Activated CD4-positive, alpha-beta memory T cell treated with anti-CD3 and anti-CD28 coated beads for 36 hours (primary cell): ENCODE measurements at regions of chr12 and their contacts with region 1.

Region 1: DNA sequence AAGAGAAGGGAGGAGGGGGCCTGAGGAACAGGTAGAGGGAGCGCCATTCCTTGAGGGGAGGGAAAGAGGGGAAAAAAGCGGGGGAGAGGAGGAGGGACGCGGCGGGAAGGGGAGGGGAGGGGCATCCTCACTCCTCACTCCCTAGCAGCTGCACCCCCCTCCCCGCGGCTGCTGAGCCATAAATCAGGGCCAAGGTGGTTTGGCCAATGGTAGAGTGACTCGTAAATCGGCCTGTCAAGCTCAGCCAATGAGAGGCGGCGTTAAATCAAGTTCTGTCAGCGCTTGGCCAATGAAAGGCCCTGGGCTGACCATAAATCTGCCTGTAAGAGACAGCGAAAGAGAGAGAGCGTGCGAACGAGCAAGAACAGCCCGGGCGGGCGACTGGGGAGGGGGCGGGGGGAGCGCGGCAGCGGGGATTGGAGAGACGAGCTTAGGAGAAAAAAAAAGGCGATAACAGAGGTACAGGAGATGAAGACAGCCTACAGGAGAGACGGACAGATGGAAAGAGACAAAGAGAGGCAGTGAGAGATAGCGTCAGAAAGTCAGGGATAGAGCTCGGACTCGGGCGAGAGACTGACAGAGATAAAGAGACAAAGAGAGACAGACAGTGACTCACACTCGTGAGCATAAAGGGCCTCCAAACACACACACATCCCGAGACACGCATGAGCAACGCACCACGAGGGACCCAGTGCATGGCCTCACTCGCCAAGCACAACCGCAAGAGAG is 5.1 kb downstream of the GPR84 start:
- DNase-seq: peak; percentile 97
- H3K4me3 Mint-ChIP-seq: no peak overlapping the region
- H3K27ac Mint-ChIP-seq: no peak overlapping the region
- H3K4me1 Mint-ChIP-seq: peaks cover 16% of the 10 kb centered on the region
- H3K27me3 Mint-ChIP-seq: no peaks in the 10 kb centered on the region

Region 2: DNA sequence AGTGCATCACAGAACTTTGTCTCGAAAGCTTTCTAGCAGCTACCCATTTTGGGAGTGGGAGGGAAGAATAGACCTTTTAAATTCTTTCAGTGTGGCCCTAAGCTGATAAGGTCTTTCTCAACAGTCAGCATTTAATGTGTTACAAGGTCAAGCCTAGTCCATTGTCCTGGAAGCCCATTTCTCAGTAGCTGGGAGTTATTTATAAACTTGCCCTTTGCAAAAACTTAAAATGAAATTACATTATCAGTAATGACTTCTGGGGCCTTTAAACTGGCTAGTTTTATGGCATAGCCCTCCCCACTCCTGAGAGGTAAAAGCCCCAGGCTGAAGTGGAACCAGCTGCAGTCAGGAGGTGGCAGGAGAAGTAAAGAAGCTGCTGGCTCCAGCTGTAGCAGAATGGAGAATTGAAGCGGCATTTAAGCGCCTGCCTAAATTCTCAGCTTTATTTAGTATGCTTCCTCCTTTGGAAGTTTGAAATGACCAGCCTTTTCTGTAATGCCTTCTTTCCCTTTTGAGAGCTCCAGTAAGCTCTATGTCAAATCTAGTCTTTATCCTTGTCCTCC is 21.8 kb before region 1 on chr12:
- CTCF ChIA-PET with region 1: interaction called, 29 read pairs
- POLR2A ChIA-PET with region 1: interaction called, 7 read pairs
- intact Hi-C with region 1: no loop called
- DNase-seq: no peak
- H3K4me3 Mint-ChIP-seq: no peak overlapping the region
- H3K27ac Mint-ChIP-seq: no peak overlapping the region
- H3K4me1 Mint-ChIP-seq: peaks cover 18% of the 10 kb centered on the region
- H3K27me3 Mint-ChIP-seq: no peaks in the 10 kb centered on the region